ENCODE measurements at regions of chr15 and their contacts with region 1.

Region 1: DNA sequence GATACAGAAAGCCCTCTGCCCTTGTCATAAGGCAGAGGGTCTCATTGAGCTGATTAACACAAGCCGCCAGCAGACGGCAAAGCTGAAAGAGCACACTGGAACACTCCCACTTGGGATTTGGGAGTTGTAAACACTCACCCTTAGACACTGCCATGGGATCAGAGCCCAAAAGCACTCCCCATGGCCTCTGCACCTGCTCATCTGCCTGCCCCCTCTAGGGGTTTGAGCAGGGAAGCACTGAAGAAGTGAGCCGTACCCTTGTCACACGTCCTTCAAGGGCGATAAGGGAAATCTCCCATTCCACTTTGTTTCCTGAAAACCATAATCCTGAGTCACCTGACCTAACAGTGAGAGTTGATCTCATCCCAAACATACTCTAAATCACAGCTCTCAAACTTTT is 14.7 kb downstream of the FSIP1 start:
- DNase-seq: no peak
- H3K4me3 ChIP-seq: no peak overlapping the region
- H3K27ac ChIP-seq: no peak overlapping the region
- H3K4me1 ChIP-seq: no peaks in the 10 kb centered on the region
- H3K27me3 ChIP-seq: no peaks in the 10 kb centered on the region
- CTCF ChIP-seq: no peak
- POLR2A ChIP-seq: no peak

Region 2: DNA sequence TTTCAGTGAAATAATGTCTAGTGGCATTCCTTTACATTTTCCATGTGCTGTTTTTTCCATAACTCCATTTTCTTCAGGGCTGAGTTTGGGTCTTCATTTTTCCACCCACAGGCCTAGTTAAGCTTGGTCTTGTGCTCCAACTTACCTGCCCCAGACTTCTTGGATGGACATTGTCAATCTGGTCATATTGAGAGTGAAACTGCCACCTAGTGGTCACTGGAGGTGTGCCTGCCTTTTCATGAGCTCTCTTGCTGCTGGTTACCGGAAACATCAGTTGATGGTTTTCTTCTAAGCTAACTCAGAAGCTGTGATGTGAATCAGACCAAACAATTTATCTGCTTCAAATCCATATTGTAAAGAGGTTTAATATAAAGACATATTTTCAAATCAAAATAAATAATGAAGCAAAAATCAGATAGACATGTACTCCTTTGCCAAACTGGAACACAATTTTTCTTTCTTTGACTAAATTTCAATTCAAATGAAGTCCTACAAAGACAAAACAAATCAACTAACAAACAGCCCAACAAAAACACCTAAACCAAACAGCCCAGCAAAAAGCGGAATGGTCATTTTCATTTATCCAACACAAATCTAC is 1068.2 kb before region 1 on chr15:
- intact Hi-C with region 1: loop called in 1 of 2 experiments (anchors 10 kb)
- DNase-seq: peak; percentile 46 to 80 (median 49)
- H3K4me3 ChIP-seq: no peak overlapping the region
- H3K27ac ChIP-seq: no peak overlapping the region
- H3K4me1 ChIP-seq: no peaks in the 10 kb centered on the region
- H3K27me3 ChIP-seq: no peaks in the 10 kb centered on the region
- CTCF ChIP-seq: peak; percentile 57 to 82 (median 64)
- POLR2A ChIP-seq: no peak

Region 3: DNA sequence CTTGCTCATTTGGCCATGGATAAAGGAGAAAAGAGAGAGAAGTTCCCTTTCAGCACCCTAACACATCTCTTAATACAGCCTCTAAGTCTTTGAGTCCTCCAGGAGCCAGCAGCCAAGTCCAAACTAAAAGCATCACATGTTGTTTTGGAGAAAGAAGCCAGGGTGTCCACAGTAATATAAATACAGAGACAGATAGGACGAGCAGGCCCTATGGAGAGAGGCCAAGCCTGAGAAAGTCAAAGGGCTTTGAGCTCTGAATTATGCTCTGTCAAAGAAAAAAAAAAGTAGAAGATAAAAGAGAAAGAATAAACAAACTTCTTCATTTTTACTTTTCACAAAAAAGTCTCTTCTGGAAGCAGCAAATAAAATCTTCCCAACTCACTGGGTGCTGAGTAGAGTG is 279.4 kb before region 1 on chr15:
- intact Hi-C with region 1: no loop called
- DNase-seq: peak in 2 of 7 donors; percentile 27
- H3K4me3 ChIP-seq: no peak overlapping the region
- H3K27ac ChIP-seq: peak overlapping the region in 1 of 5 donors; percentile 31
- H3K4me1 ChIP-seq: peaks cover 0 to 6% of the 10 kb centered on the region in 2 donors
- H3K27me3 ChIP-seq: no peaks in the 10 kb centered on the region
- CTCF ChIP-seq: no peak
- POLR2A ChIP-seq: no peak

Region 4: DNA sequence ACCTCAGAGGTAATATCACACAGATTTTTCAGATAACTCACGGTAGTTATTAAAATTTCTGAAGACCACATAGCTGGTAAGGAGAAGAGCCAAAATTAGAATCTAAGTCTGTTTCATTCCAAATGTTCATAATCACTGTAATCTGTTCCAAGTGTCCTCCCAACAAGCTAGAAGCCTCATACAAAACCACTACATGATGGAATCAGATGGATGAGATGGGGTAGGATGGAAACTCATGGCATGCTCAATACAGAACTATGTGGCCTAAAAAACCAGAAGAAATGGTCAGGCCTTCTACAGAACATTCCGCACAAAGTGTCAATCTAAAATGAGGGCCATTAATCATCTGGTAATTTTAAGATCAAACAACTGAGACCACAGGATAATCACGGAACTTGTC is 95.3 kb before region 1 on chr15:
- intact Hi-C with region 1: no loop called
- DNase-seq: no peak
- H3K4me3 ChIP-seq: no peak overlapping the region
- H3K27ac ChIP-seq: no peak overlapping the region
- H3K4me1 ChIP-seq: no peaks in the 10 kb centered on the region
- H3K27me3 ChIP-seq: no peaks in the 10 kb centered on the region
- CTCF ChIP-seq: no peak
- POLR2A ChIP-seq: no peak

Region 5: GRCh38 chr15:39874890-39875549 is 107.1 kb after region 1 on chr15:
- intact Hi-C with region 1: no loop called
- DNase-seq: peak in 4 of 7 donors; percentile 22 to 63 (median 40)
- H3K4me3 ChIP-seq: no peak overlapping the region
- H3K27ac ChIP-seq: no peak overlapping the region
- H3K4me1 ChIP-seq: no peaks in the 10 kb centered on the region
- H3K27me3 ChIP-seq: no peaks in the 10 kb centered on the region
- CTCF ChIP-seq: peak; percentile 45 to 62 (median 53)
- POLR2A ChIP-seq: no peak

Measured in adrenal gland (tissue), 19 donors.